Calu3 (cell line): ENCODE measurements at regions of chr6 and their contacts with region 1.

Region 1: GRCh38 chr6:91317247-91317835 is 730.5 kb upstream of the MAP3K7 start:
- DNase-seq: no peak
- H3K4me3 Mint-ChIP-seq: no peak overlapping the region
- H3K27ac Mint-ChIP-seq: no peak overlapping the region
- H3K4me1 Mint-ChIP-seq: no peaks in the 10 kb centered on the region
- H3K27me3 Mint-ChIP-seq: no peaks in the 10 kb centered on the region
- CTCF ChIP-seq: no peak

Region 2: GRCh38 chr6:91273729-91274128 is 43.6 kb before region 1 on chr6:
- CTCF ChIA-PET with region 1: no interaction called
- intact Hi-C with region 1: loop called (anchors 1 kb)
- DNase-seq: no peak
- H3K4me3 Mint-ChIP-seq: no peak overlapping the region
- H3K27ac Mint-ChIP-seq: no peak overlapping the region
- H3K4me1 Mint-ChIP-seq: no peaks in the 10 kb centered on the region
- H3K27me3 Mint-ChIP-seq: no peaks in the 10 kb centered on the region
- CTCF ChIP-seq: no peak

Region 3: DNA sequence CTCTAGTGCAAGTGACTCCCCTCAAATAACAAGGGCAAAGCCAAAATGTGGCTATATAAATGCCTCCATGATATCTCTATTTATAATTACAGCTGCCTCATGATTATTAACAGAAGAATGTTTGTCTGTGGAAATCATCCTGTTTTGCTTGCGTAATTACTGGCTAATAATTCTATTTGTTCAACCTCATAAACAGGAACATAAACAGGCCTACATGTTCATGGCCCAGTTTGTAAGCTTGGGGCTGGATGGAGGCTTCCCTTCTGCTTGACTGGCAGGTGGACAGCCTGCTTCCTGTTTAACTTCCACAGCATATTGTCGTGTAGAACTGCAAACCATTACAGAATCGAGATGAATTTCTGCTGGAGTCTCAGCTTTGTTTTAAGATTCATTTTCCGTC is 35.5 kb after region 1 on chr6:
- CTCF ChIA-PET with region 1: no interaction called
- intact Hi-C with region 1: no loop called
- DNase-seq: no peak
- H3K4me3 Mint-ChIP-seq: no peak overlapping the region
- H3K27ac Mint-ChIP-seq: no peak overlapping the region
- H3K4me1 Mint-ChIP-seq: no peaks in the 10 kb centered on the region
- H3K27me3 Mint-ChIP-seq: no peaks in the 10 kb centered on the region
- CTCF ChIP-seq: no peak